ENCODE measurements at regions of chr20 and their contacts with region 1.

Region 1: GRCh38 chr20:50680412-50680908 is 10.9 kb downstream of the RIPOR3 start:
- DNase-seq: peak; percentile 69 to 86
- H3K4me3 ChIP-seq: peak overlapping the region; percentile 30; the same call in 1 of the 2 replicates
- H3K27ac ChIP-seq: peak overlapping the region; percentile 80
- H3K4me1 ChIP-seq: peaks cover 57% of the 10 kb centered on the region
- H3K27me3 ChIP-seq: no peaks in the 10 kb centered on the region
- CTCF ChIP-seq: no peak

Region 2: GRCh38 chr20:50575847-50576720 is 104.4 kb before region 1 on chr20:
- CTCF ChIA-PET with region 1: interaction called, 14 read pairs
- POLR2A ChIA-PET with region 1: interaction called, 4 read pairs
- intact Hi-C with region 1: no loop called
- DNase-seq: peak in 1 of 2 experiments; percentile 60
- H3K4me3 ChIP-seq: no peak overlapping the region
- H3K27ac ChIP-seq: no peak overlapping the region
- H3K4me1 ChIP-seq: no peaks in the 10 kb centered on the region
- H3K27me3 ChIP-seq: no peaks in the 10 kb centered on the region
- CTCF ChIP-seq: peak; percentile 81

Region 3: DNA sequence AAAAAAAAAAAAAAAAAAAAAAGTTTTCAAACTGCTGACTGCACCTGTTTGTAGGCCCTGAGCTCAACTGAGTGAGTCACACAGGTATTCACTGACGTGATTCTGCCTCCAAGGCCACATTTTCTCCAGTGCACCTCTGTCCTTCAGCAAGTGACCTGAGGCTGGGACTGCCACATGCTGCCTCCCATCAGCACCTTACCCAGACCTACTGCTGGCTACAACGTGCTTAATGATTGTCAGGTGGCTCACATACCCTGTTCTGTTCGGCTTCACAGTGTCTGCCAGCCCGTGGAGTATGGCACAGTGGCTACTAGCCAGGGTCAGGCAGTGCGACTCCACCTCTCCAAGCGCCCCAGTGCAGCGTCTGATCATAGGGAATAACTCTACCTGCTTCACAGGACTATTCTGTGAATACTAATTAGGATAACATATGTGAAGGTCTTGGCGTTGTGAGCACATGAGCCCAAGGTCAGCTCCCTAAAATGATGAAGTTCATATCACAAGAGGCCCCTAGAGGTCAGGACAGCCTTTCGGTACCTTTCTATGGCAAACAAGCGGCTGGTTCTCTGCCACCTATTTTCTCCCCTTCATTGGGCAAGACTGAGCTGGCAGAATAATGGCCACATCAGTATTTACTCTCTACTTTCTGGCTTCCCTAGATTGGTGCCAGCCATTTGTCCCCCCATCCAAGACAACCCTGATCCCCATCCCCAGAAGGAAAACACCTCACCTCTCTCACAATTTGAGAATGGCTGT is 17.2 kb before region 1 on chr20:
- CTCF ChIA-PET with region 1: interaction called, 9 read pairs
- POLR2A ChIA-PET with region 1: interaction called, 8 read pairs
- intact Hi-C with region 1: loop called (anchors 1 kb)
- DNase-seq: peak; percentile 81 to 96
- H3K4me3 ChIP-seq: no peak overlapping the region
- H3K27ac ChIP-seq: peak overlapping the region; percentile 85
- H3K4me1 ChIP-seq: peaks cover 67% of the 10 kb centered on the region
- H3K27me3 ChIP-seq: no peaks in the 10 kb centered on the region
- CTCF ChIP-seq: peak; percentile 71

Region 4: DNA sequence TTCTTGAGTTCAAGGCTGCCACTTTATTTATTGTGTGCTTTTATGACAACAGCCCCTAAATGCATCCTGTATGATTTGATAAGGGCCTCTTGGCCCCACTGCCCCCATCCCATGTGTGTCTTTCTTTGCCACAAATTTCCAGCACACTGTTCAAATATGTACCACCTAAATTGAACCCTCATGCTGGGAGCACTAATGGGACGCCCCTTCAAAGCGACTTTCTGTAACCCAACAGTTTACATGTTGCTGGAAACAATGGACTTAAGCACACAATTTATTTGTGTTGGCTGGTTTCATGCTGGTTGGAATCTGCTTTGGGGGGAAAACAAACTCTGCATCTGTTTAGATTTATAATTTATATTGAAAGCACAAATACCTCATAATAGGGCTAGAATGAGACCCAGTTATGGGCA is 21.1 kb after region 1 on chr20:
- CTCF ChIA-PET with region 1: no interaction called
- POLR2A ChIA-PET with region 1: no interaction called
- intact Hi-C with region 1: no loop called
- DNase-seq: no peak
- H3K4me3 ChIP-seq: no peak overlapping the region
- H3K27ac ChIP-seq: no peak overlapping the region
- H3K4me1 ChIP-seq: peaks cover 6% of the 10 kb centered on the region; the same call in 1 of the 2 replicates
- H3K27me3 ChIP-seq: no peaks in the 10 kb centered on the region
- CTCF ChIP-seq: no peak

Region 5: GRCh38 chr20:50713657-50714101 is 33.2 kb after region 1 on chr20:
- CTCF ChIA-PET with region 1: interaction called, 3 read pairs
- POLR2A ChIA-PET with region 1: interaction called, 8 read pairs
- intact Hi-C with region 1: loop called (anchors 1 kb)
- DNase-seq: no peak
- H3K4me3 ChIP-seq: no peak overlapping the region
- H3K27ac ChIP-seq: no peak overlapping the region
- H3K4me1 ChIP-seq: peaks cover 93% of the 10 kb centered on the region
- H3K27me3 ChIP-seq: no peaks in the 10 kb centered on the region
- CTCF ChIP-seq: no peak

Region 6: GRCh38 chr20:50750145-50750671 is 69.7 kb after region 1 on chr20:
- CTCF ChIA-PET with region 1: interaction called, 6 read pairs
- POLR2A ChIA-PET with region 1: interaction called, 19 read pairs
- intact Hi-C with region 1: no loop called
- DNase-seq: no peak
- H3K4me3 ChIP-seq: no peak overlapping the region
- H3K27ac ChIP-seq: no peak overlapping the region
- H3K4me1 ChIP-seq: peaks cover 36% of the 10 kb centered on the region
- H3K27me3 ChIP-seq: no peaks in the 10 kb centered on the region
- CTCF ChIP-seq: no peak

Region 7: GRCh38 chr20:51076786-51077685 is 396.6 kb after region 1 on chr20:
- CTCF ChIA-PET with region 1: no interaction called
- POLR2A ChIA-PET with region 1: no interaction called
- intact Hi-C with region 1: no loop called
- DNase-seq: no peak
- H3K4me3 ChIP-seq: no peak overlapping the region
- H3K27ac ChIP-seq: no peak overlapping the region
- H3K4me1 ChIP-seq: no peaks in the 10 kb centered on the region
- H3K27me3 ChIP-seq: peaks cover 89% of the 10 kb centered on the region
- CTCF ChIP-seq: no peak

Measured in PC-9 (cell line).